Heart left ventricle (tissue), 16 donors: ENCODE measurements at regions of chr9 and their contacts with region 1.

Region 1: GRCh38 chr9:15510789-15511575 is at the start of gene PSIP1:
- DNase-seq: peak; percentile 75 to 88 (median 77)
- ATAC-seq: peak; percentile 87 to 96 (median 94)
- H3K4me3 ChIP-seq: peak within 1 kb of the TSS; percentile 80 to 99 (median 92)
- H3K27ac ChIP-seq: peak within 1 kb of the TSS; percentile 81 to 98 (median 92)
- H3K4me1 ChIP-seq: peaks cover 0 to 33% (median 18%) of the 10 kb centered on the region in 12 donors
- H3K27me3 ChIP-seq: no peaks in the 10 kb centered on the region
- CTCF ChIP-seq: peak in 7 of 12 donors; percentile 3 to 20 (median 9)
- POLR2A ChIP-seq: peak in 1 of 2 donors; percentile 65
- total RNA-seq, gene PSIP1: 16.5 to 29.1 (median 21.9) TPM

Region 2: DNA sequence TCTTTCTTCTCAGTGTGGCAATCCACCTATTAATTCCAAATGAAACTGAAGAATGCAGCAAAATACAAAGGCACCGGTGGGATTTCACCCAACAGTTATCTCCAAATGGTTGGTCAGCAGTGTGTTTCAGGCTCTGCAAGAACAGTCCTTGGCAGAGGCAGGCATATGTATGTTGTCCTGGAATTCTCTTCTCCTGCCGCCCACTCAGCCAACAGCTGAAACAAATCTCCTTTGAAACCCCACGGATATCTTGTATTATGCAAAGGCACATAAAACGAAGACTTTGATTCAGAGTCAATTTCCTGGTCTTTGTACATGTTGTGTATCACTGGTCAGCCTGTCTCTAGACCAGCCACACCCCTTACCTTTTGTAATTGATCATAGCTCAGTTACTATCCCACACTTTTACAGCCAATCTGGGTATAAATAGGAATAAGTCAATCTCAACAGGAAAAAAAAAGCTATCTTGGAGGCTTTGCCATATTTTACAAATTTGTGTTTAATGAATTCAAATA is 630.0 kb before region 1 on chr9:
- intact Hi-C with region 1: no loop called
- DNase-seq: no peak
- ATAC-seq: peak in 1 of 4 donors; percentile 38
- H3K4me3 ChIP-seq: no peak overlapping the region
- H3K27ac ChIP-seq: peak overlapping the region in 1 of 12 donors; percentile 32
- H3K4me1 ChIP-seq: peaks cover 0 to 9% (median 0%) of the 10 kb centered on the region in 12 donors
- H3K27me3 ChIP-seq: no peaks in the 10 kb centered on the region
- CTCF ChIP-seq: no peak
- POLR2A ChIP-seq: no peak

Region 3: DNA sequence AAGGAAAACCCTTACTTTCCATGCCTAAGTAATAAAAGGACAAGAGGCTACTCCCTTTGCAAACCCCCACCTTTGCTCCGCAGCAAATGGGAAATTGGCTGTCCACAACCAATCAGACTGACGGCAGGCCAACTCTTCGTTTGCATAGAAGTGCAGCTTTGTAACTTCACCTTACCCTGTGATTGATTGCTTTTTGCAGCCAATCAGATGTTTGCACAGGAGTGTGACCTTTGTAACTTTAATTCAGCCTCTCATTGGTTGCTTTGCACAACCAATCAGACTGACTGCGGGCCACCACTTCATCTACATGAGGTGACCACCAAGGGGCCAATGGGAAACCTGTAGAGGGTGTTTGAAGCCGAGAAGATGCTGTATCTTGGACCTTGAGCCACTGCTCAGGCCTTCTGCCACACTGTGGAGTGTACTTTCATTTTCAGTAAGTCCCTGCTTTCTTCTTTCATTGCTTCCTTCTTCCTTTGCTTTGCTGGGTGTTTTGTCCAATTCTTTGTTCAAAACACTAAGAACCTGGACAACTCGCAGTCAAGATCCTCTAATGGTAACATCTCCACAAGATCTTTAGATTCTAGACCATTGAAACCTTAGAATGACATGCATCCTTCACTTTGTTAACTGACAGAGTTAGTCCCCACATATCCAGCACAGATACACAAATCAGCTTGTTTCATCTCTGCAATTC is 549.5 kb before region 1 on chr9:
- intact Hi-C with region 1: no loop called
- DNase-seq: no peak
- ATAC-seq: no peak
- H3K4me3 ChIP-seq: no peak overlapping the region
- H3K27ac ChIP-seq: peak overlapping the region in 6 of 12 donors; percentile 7 to 59 (median 30)
- H3K4me1 ChIP-seq: peaks cover 0 to 20% (median 2%) of the 10 kb centered on the region in 12 donors
- H3K27me3 ChIP-seq: no peaks in the 10 kb centered on the region
- CTCF ChIP-seq: no peak
- POLR2A ChIP-seq: no peak

Region 4: DNA sequence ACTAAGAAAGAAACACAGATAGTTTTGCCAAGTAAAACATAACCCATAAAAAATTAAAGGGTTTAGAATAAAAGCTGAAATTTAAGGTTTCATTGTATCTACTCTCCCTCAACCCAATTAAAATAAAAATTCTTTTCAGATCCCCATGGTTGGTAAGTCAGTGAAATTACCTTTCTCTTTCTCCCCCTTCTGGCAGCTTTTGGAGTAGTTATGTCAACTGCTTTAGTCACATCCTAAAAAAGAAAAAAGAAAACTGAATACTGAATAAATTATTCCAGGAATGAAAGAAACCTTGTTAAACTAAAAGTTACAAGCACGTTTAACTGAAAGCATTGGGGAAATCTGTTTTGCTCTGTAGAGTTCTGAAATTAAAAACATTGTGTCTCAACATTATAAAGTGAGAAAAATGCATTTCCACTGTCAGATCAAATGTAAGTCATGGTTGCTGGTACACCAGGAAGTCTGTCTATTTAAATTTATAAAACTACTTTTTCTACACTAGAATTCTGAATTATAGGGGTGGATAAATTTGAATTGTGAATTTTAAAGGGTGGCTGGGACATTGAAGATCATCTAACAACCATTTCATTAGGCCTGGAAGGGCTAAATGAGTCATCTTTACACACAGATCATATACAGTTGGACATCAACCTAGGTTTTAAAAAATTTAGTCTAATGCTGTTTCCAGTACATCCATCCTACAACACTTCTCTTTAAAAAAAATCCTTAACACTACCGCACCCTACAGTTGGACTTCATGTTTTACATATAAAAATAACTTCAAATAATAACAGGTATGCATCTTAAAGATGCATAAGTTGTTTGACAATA is 24.9 kb before region 1 on chr9:
- intact Hi-C with region 1: no loop called
- DNase-seq: no peak
- ATAC-seq: no peak
- H3K4me3 ChIP-seq: no peak overlapping the region
- H3K27ac ChIP-seq: no peak overlapping the region
- H3K4me1 ChIP-seq: peaks cover 0 to 5% (median 0%) of the 10 kb centered on the region in 12 donors
- H3K27me3 ChIP-seq: no peaks in the 10 kb centered on the region
- CTCF ChIP-seq: peak; percentile 10 to 54 (median 28)
- POLR2A ChIP-seq: no peak

Region 5: GRCh38 chr9:15552636-15553527 is 41.9 kb after region 1 on chr9 and contains the start of gene CCDC171:
- intact Hi-C with region 1: loop called in 6 of 10 experiments (anchors 1 to 10 kb)
- DNase-seq: peak; percentile 93 to 95 (median 95)
- ATAC-seq: peak; percentile 96 to 99 (median 98)
- H3K4me3 ChIP-seq: peak within 1 kb of the TSS; percentile 54 to 94 (median 80)
- H3K27ac ChIP-seq: peak within 1 kb of the TSS; percentile 59 to 91 (median 82)
- H3K4me1 ChIP-seq: peaks cover 0 to 10% (median 4%) of the 10 kb centered on the region in 12 donors
- H3K27me3 ChIP-seq: no peaks in the 10 kb centered on the region
- CTCF ChIP-seq: peak in 1 of 12 donors; percentile 7
- POLR2A ChIP-seq: peak in 1 of 2 donors; percentile 62
- total RNA-seq, gene CCDC171: 0.44 to 3.4 (median 1.4) TPM

Region 6: DNA sequence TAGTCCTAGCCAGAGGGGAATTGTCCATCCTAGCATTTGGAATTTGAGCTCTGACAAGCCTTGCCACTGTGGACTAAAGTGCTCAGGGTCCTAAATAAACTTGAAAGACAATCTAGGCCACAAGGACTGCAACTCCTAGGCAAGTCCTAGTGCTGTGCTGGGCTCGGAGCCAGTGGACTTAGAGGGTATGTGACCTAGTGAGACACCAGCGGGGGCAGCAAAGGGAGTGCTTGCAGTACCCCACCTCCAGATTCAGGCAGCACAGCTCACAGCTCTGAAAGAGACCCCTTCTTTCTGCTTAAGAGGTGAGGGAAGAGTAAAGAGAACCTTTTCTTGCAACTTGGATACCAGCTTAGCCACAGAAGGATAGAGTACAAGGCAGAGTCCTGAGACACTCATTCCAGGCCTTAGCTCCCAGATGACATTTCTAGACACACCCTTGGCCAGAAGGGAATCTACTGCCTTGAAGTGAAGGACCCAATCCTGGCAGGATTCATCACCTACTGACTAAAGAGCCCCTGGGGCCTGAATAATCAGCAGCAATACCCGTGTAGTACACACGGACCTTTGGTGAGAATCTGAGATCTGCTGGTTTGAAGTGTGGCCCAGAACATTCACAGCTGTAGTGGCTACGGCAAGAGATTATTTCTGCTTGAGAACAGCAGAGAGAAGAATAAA is 206.4 kb after region 1 on chr9:
- intact Hi-C with region 1: no loop called
- DNase-seq: no peak
- ATAC-seq: no peak
- H3K4me3 ChIP-seq: no peak overlapping the region
- H3K27ac ChIP-seq: no peak overlapping the region
- H3K4me1 ChIP-seq: no peaks in the 10 kb centered on the region
- H3K27me3 ChIP-seq: no peaks in the 10 kb centered on the region
- CTCF ChIP-seq: no peak
- POLR2A ChIP-seq: no peak